ENCODE measurements at regions of chr7 and their contacts with region 1.

Region 1: DNA sequence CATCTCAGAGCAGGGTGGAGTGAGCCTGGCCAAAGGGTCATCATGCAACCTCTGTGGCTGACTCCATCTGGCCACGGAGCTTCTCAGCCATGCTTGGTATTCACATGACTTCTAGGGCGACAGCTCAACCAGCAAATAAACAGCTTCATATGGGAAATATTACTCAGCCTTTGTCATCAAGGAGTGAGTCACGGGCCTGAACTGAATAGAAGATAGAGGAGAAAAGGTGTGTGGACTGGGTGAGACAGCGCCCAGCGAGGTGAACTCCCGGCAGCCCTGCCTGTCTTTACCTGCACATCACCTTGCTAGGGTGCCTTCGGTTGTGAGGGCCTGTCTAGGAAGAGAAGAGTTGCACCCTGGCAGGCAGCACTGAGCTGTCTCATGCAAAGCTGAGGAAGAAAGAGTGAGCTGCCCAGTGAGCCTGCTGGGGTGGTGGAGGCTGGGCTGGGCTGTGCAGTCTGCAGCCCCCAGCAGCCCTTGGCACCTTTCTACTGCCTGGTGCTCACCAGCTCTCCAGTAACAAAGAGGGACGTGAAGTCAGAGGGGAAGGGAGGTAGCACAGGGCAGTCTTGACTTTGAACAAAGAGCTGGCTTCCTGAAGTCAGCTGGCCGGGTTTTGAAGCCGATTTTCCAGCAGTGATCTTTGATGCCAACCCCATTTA is 114.2 kb downstream of the EGFR start:
- DNase-seq: peak; percentile 97
- H3K4me3 Mint-ChIP-seq: peak overlapping the region; percentile 44
- H3K27ac Mint-ChIP-seq: peak overlapping the region; percentile 90
- H3K4me1 Mint-ChIP-seq: peaks cover 54% of the 10 kb centered on the region
- H3K27me3 Mint-ChIP-seq: no peaks in the 10 kb centered on the region
- CTCF ChIP-seq: no peak

Region 2: DNA sequence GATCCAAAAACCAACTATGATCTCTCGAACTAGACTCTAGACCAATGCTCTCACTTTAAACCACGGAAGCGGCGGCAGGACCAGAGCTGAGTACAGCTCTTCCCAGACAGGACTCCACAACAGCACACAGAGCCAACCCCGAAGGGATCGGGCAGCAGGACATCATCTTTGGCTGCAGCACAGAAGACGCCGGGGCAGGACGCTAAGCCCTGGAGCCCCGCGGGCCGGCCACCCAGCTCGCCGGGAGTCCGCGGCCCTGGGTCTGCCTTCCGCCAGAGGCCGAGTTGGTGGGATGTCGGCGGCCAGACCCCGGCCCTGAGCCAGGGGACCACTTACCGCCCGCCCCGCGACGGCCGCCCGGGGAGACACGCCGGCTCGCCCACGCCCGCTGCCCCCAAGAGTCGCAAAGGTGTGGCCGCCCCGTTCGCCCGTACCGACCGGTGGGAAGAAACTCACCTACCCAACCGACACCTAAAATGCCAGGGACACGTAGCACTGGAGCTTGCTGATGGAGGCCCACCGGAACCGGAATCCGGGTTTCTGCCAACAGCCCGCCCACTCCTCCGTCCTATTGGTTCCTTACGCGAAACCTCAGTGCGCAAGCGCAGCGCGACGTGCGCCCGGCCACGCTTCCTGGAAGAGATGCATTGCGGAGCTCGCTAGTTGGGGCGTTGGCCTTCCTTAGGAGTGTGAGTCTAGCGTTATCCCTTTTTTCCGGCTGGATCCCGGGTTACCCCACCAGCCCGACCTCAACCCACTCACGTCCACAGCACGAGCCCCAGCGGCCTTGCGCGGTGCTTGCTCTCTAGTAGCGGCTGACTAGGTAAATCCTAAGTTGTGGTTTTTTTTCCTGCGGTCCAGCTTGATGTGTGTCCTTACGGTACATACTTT is 374.1 kb before region 1 on chr7 and contains the start of gene SEC61G:
- CTCF ChIA-PET with region 1: interaction called, 5 read pairs
- POLR2A ChIA-PET with region 1: interaction called, 10 read pairs
- intact Hi-C with region 1: no loop called
- DNase-seq: peak; percentile 97
- H3K4me3 Mint-ChIP-seq: peak within 1 kb of the TSS; percentile 94
- H3K27ac Mint-ChIP-seq: peak within 1 kb of the TSS; percentile 96
- H3K4me1 Mint-ChIP-seq: peaks cover 5% of the 10 kb centered on the region
- H3K27me3 Mint-ChIP-seq: no peaks in the 10 kb centered on the region
- CTCF ChIP-seq: no peak
- total RNA-seq, gene SEC61G: 246 and 490 TPM in 2 replicates

Region 3: GRCh38 chr7:54944179-54944578 is 188.8 kb before region 1 on chr7:
- CTCF ChIA-PET with region 1: interaction called, 3 read pairs
- POLR2A ChIA-PET with region 1: interaction called, 10 read pairs
- intact Hi-C with region 1: no loop called
- DNase-seq: peak; percentile 21
- H3K4me3 Mint-ChIP-seq: no peak overlapping the region
- H3K27ac Mint-ChIP-seq: peak overlapping the region; percentile 4
- H3K4me1 Mint-ChIP-seq: peaks cover 24% of the 10 kb centered on the region
- H3K27me3 Mint-ChIP-seq: no peaks in the 10 kb centered on the region
- CTCF ChIP-seq: no peak

Region 4: GRCh38 chr7:55073945-55074499 is 59.0 kb before region 1 on chr7:
- CTCF ChIA-PET with region 1: interaction called, 3 read pairs
- POLR2A ChIA-PET with region 1: interaction called, 15 read pairs
- intact Hi-C with region 1: loop called (anchors 1 kb)
- DNase-seq: peak; percentile 98
- H3K4me3 Mint-ChIP-seq: peak overlapping the region; percentile 80
- H3K27ac Mint-ChIP-seq: peak overlapping the region; percentile 100
- H3K4me1 Mint-ChIP-seq: peaks cover 34% of the 10 kb centered on the region
- H3K27me3 Mint-ChIP-seq: no peaks in the 10 kb centered on the region
- CTCF ChIP-seq: no peak

Region 5: GRCh38 chr7:55110661-55111361 is 22.2 kb before region 1 on chr7:
- CTCF ChIA-PET with region 1: interaction called, 8 read pairs
- POLR2A ChIA-PET with region 1: interaction called, 29 read pairs
- intact Hi-C with region 1: no loop called
- DNase-seq: no peak
- H3K4me3 Mint-ChIP-seq: peak overlapping the region; percentile 21
- H3K27ac Mint-ChIP-seq: peak overlapping the region; percentile 84
- H3K4me1 Mint-ChIP-seq: peaks cover 55% of the 10 kb centered on the region
- H3K27me3 Mint-ChIP-seq: no peaks in the 10 kb centered on the region
- CTCF ChIP-seq: no peak

Measured in MCF 10A (cell line).